CD8-positive, alpha-beta memory T cell (primary cell): ENCODE measurements at regions of chr17 and their contacts with region 1.

Region 1: DNA sequence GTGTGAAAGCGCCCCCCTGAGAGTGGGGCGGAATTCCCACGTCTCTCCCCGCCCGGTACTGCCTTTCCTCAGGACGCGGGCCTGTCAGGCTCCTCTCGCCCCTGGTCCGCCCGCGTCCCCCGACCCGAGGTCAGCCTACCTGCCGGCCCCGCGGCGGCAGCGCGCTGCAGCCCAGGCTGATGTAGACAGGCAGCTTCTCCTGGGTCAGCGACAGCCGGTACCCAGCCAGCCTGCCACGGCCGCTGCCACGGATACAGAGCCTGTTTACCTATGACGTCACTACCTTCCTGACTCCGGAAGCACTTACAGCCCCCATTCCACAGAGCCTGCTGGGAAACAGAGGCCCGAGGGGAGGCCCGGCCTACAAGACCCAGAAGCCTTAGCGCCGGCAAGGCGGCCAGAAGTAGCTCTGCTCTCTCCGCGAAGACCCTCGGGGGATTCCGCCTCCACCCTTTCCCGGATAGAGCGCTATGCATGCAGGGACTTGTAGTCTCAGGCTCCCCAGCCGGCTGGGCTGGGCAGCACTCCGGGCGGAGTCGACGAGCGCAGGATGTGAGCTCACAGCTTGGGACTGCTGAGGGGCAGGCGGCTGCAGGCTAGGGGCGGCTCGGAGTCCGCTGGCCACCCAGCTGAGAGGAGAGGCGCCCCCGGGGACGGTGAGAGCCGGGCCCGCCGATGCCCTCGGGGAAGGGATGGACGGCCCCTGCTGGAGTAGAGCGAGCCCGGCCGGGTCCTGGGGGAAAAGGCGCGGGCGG is at the starts of genes IFT20 and TNFAIP1:
- DNase-seq: peak; percentile 95 to 99 (median 97)
- H3K4me3 ChIP-seq: peak within 1 kb of the TSS; percentile 86
- H3K4me3 Mint-ChIP-seq: peak within 1 kb of the TSS; percentile 90 to 99 (median 96)
- H3K27ac ChIP-seq: peak within 1 kb of the TSS; percentile 98
- H3K27ac Mint-ChIP-seq: peak within 1 kb of the TSS; percentile 92 to 99 (median 96)
- H3K4me1 ChIP-seq: peaks cover 31% of the 10 kb centered on the region
- H3K4me1 Mint-ChIP-seq: peaks cover 39 to 56% (median 50%) of the 10 kb centered on the region in 3 donors
- H3K27me3 ChIP-seq: no peaks in the 10 kb centered on the region
- H3K27me3 Mint-ChIP-seq: no peaks in the 10 kb centered on the region
- total RNA-seq, gene IFT20: 26.0 to 29.4 TPM
- total RNA-seq, gene TNFAIP1: 29.0 to 30.6 TPM

Region 2: GRCh38 chr17:28097901-28098300 is 237.5 kb before region 1 on chr17:
- CTCF ChIA-PET with region 1: no interaction called
- POLR2A ChIA-PET with region 1: no interaction called
- DNase-seq: no peak
- H3K4me3 ChIP-seq: no peak overlapping the region
- H3K4me3 Mint-ChIP-seq: no peak overlapping the region
- H3K27ac ChIP-seq: no peak overlapping the region
- H3K27ac Mint-ChIP-seq: no peak overlapping the region
- H3K4me1 ChIP-seq: no peaks in the 10 kb centered on the region
- H3K4me1 Mint-ChIP-seq: peaks cover 5 to 18% (median 16%) of the 10 kb centered on the region in 3 donors
- H3K27me3 ChIP-seq: no peaks in the 10 kb centered on the region
- H3K27me3 Mint-ChIP-seq: no peaks in the 10 kb centered on the region

Region 3: DNA sequence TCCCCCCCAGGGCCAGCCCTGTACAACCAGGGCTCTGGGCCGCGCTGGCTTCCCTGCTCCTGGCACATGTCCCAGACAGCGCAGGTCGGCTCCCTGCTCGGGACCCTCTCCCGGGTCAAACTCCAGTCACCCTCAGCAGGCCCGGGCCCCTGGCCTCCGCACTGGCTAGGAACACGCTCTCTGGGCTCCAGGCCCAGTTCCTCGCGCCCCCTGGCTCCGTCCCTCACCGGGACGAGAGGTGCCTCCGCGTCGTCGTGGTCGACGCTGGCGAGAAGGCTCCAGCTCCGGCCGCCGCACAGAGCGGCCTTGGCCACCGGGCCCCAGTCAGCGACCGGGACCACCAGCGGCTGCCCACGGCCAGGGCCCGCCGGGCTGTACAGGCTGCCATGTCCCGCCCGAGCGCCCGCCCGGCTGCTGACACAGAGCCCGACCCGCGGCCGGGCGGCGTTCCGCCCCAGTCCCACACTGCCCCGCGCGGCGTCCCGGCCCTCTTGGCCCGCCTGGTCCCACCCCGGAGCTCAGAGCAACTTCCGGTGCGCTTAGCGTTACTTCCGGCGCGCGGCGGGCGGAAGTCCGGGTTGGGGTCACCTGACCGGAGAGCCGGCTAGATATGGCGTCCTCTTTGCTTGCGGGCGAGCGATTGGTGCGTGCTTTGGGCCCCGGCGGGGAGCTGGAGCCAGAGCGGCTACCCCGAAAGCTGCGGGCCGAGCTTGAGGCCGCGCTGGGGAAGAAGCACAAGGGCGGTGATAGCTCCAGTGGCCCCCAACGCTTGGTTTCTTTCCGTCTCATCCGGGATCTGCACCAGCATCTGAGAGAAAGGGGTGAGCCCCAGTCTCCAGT is 21.9 kb after region 1 on chr17 and contains the start of gene POLDIP2:
- CTCF ChIA-PET with region 1: interaction called, 30 read pairs
- POLR2A ChIA-PET with region 1: interaction called, 62 read pairs
- DNase-seq: peak; percentile 93 to 97 (median 95)
- H3K4me3 ChIP-seq: peak within 1 kb of the TSS; percentile 89
- H3K4me3 Mint-ChIP-seq: peak within 1 kb of the TSS; percentile 91 to 96 (median 93)
- H3K27ac ChIP-seq: peak within 1 kb of the TSS; percentile 81
- H3K27ac Mint-ChIP-seq: peak within 1 kb of the TSS; percentile 92 to 98 (median 96)
- H3K4me1 ChIP-seq: peaks cover 22% of the 10 kb centered on the region
- H3K4me1 Mint-ChIP-seq: peaks cover 24 to 35% (median 25%) of the 10 kb centered on the region in 3 donors
- H3K27me3 ChIP-seq: no peaks in the 10 kb centered on the region
- H3K27me3 Mint-ChIP-seq: no peaks in the 10 kb centered on the region
- total RNA-seq, gene POLDIP2: 134 to 135 TPM

Region 4: GRCh38 chr17:28416703-28417311 is 81.4 kb after region 1 on chr17:
- CTCF ChIA-PET with region 1: interaction called, 13 read pairs
- POLR2A ChIA-PET with region 1: interaction called, 3 read pairs
- DNase-seq: peak in 4 of 5 donors; percentile 11 to 63 (median 40)
- H3K4me3 ChIP-seq: no peak overlapping the region
- H3K4me3 Mint-ChIP-seq: peak overlapping the region in 1 of 7 donors; percentile 31
- H3K27ac ChIP-seq: no peak overlapping the region
- H3K27ac Mint-ChIP-seq: no peak overlapping the region
- H3K4me1 ChIP-seq: no peaks in the 10 kb centered on the region
- H3K4me1 Mint-ChIP-seq: peaks cover 3 to 7% (median 7%) of the 10 kb centered on the region in 3 donors
- H3K27me3 ChIP-seq: no peaks in the 10 kb centered on the region
- H3K27me3 Mint-ChIP-seq: peaks cover 6 to 16% of the 10 kb centered on the region in 2 donors